Endothelial cell of umbilical vein (primary cell): ENCODE measurements at regions of chr1 and their contacts with region 1.

Region 1: GRCh38 chr1:16396591-16396990 is 29.5 kb downstream of the SZRD1 start:
- DNase-seq: peak; percentile 66
- H3K4me3 ChIP-seq: no peak overlapping the region
- H3K27ac ChIP-seq: no peak overlapping the region
- H3K4me1 ChIP-seq: peaks cover 13% of the 10 kb centered on the region
- H3K27me3 ChIP-seq: no peaks in the 10 kb centered on the region
- CTCF ChIP-seq: no peak
- POLR2A ChIP-seq: no peak

Region 2: DNA sequence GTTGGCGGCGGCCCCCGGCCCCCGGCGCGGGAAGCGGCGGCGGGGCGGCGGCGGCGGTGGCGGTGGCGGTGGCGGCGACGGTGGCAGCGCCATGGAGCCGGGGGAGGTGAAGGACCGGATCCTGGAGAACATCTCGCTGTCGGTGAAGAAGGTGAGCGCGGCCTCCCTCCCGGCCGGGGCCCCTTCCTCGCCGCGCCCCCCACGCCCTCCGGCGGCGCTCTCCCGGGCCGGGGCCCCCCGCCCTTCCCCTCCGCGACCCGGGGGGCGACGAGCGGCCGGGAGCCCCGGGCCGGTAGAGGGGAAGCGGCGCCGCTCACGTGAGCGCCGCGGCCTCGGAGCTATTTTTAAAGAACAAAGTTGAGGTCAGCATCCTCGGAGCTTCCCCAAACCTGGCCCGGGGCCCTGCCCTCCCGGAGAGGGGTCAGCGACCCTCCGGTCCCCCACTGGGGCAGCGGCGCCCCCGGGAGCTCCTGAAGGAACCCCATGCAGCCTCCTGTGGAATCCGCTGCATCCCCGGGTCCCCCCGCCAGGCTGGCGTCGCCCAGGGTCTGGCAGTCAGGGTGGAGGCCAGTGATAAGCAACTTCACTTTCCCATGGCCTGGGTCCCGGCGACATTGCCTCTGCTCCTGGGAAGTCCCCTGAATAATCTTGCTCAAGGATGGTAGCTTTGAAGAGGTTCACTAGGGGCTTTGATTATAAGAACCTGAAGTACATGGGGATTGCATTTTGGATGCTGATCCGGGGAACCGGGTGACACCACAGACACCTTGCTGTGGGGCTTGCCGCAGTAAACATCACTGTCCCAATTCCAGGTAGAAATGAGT is 711.9 kb before region 1 on chr1:
- CTCF ChIA-PET with region 1: no interaction called
- POLR2A ChIA-PET with region 1: interaction called, 11 read pairs
- dilution Hi-C with region 1: no loop called
- intact Hi-C with region 1: no loop called
- DNase-seq: peak; percentile 47
- H3K4me3 ChIP-seq: peak overlapping the region; percentile 61 to 87 (median 73)
- H3K27ac ChIP-seq: peak overlapping the region; percentile 70
- H3K4me1 ChIP-seq: peaks cover 7% of the 10 kb centered on the region
- H3K27me3 ChIP-seq: no peaks in the 10 kb centered on the region
- CTCF ChIP-seq: peak in 1 of 2 donors; percentile 8
- POLR2A ChIP-seq: no peak

Region 3: DNA sequence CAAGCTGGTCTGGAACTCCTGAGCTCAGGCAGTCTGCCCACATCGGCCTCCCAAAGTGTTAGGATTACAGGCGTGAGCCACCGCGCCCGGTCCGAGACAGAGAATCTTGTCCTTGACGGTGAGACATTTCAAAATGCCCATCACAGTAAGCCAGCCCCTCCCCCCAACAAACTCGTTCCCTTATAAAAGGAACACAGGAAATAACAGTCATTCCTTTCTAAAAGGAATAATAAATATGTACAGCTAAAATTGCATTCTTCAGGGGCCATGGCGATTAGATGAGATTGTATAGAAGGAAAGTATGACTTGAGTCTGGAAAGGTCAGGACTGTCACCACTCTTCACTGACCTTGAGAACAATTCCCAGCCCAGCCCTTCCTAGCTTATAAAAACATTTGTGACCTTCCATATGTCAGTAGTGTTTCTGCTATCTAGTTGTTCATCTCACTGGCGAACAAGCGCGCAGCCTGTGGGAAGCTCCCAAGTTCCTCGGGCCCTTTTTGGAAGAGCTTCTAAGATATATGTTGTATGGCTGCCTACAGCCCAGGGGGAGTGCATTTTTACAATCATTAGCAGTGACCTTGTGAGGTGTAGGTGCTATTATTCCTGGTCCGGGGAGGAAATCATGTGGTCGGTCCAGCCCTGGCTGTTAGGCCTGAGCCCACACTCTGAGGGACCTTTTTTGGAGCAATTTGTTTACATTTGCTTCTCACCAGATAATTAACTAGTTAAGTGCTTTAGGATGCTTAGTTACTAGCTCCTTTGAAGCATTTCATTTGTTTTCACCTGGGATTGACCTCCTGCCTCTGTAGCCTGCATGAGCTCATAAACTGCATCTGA is 20.9 kb before region 1 on chr1:
- CTCF ChIA-PET with region 1: interaction called, 6 read pairs
- POLR2A ChIA-PET with region 1: interaction called, 9 read pairs
- dilution Hi-C with region 1: no loop called
- intact Hi-C with region 1: loop called (anchors 2 kb)
- DNase-seq: peak; percentile 90
- H3K4me3 ChIP-seq: peak overlapping the region in 1 of 3 experiments; percentile 2
- H3K27ac ChIP-seq: peak overlapping the region; percentile 85
- H3K4me1 ChIP-seq: peaks cover 62% of the 10 kb centered on the region
- H3K27me3 ChIP-seq: no peaks in the 10 kb centered on the region
- CTCF ChIP-seq: no peak
- POLR2A ChIP-seq: peak; percentile 58

Region 4: DNA sequence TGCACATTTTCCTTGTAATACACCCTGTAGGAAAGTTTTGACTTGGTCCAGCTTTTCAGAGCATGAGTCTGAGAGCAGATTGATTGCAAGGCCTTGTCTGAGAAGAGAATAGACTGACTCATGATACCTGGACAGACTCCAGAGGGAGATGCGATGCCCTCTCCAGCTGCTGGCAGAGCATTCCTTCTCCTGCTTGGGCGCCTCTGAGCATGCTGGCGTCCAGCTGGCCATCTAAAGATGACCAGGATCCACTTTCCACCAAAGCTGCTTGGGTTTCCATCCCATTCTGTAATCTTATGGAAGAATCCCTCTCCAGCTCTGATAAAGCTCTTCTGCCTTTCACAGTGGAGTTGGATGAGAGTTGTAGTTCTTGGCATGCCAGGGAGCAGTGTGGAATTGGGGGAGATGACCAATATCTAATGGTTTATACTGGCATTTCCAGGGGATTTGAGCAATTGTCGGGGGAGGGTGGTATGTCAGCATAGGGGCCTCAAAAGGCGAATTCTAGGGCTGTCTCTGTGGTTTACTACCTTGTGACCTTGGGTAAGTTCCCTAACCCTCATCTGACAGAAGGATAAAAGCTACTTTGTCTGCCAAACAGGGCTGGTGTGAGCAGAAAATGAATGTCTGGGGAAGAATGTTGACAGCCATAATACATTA is 10.0 kb before region 1 on chr1:
- CTCF ChIA-PET with region 1: no interaction called
- POLR2A ChIA-PET with region 1: no interaction called
- dilution Hi-C with region 1: no loop called
- intact Hi-C with region 1: no loop called
- DNase-seq: peak; percentile 71
- H3K4me3 ChIP-seq: no peak overlapping the region
- H3K27ac ChIP-seq: no peak overlapping the region
- H3K4me1 ChIP-seq: peaks cover 21% of the 10 kb centered on the region
- H3K27me3 ChIP-seq: no peaks in the 10 kb centered on the region
- CTCF ChIP-seq: no peak
- POLR2A ChIP-seq: no peak